ENCODE measurements at regions of chr9 and their contacts with region 1.

Region 1: GRCh38 chr9:113593682-113594281 is 130.3 kb downstream of the RGS3 start:
- DNase-seq: peak; percentile 94
- H3K4me3 ChIP-seq: peak overlapping the region; percentile 45 to 62
- H3K27ac ChIP-seq: peak overlapping the region; percentile 49 to 74
- H3K4me1 ChIP-seq: peaks cover 46% of the 10 kb centered on the region
- H3K27me3 ChIP-seq: no peaks in the 10 kb centered on the region
- CTCF ChIP-seq: no peak
- POLR2A ChIP-seq: peak; percentile 60

Region 2: DNA sequence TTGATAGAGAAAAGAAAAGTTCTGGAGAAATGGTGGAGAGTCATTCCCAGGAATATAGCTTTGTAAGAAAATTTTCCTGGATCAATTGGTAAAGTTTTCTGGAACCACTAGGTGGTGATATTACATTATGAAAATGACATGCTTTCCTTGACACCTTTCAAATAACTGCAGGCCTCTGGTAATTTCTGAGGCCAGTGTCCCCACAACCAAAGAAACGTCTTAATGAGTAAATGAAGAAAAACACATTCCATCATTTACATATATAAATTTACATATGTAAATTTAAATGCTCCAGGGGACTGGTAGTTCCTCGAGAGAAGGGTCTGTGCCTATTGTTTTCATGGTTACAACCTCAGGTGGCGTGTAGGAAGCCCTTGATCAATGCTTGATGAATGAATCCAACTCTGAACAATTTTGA is 147.4 kb before region 1 on chr9:
- intact Hi-C with region 1: loop called (anchors 5 kb)
- DNase-seq: peak; percentile 41
- H3K4me3 ChIP-seq: no peak overlapping the region
- H3K27ac ChIP-seq: no peak overlapping the region
- H3K4me1 ChIP-seq: peaks cover 3% of the 10 kb centered on the region
- H3K27me3 ChIP-seq: no peaks in the 10 kb centered on the region
- CTCF ChIP-seq: peak; percentile 51 to 69 (median 66)
- POLR2A ChIP-seq: no peak

Region 3: GRCh38 chr9:113463418-113464285 is 130.1 kb before region 1 on chr9 and contains the start of gene RGS3:
- intact Hi-C with region 1: no loop called
- DNase-seq: peak; percentile 60
- H3K4me3 ChIP-seq: peak within 1 kb of the TSS in 1 of 2 donors; percentile 6
- H3K27ac ChIP-seq: no peak within 1 kb of the TSS
- H3K4me1 ChIP-seq: no peaks in the 10 kb centered on the region
- H3K27me3 ChIP-seq: no peaks in the 10 kb centered on the region
- CTCF ChIP-seq: no peak
- POLR2A ChIP-seq: no peak
- total RNA-seq, gene RGS3: 119 to 125 TPM

Region 4: GRCh38 chr9:113657703-113658544 is 64.1 kb after region 1 on chr9:
- intact Hi-C with region 1: loop called (anchors 2 kb)
- DNase-seq: peak; percentile 90
- H3K4me3 ChIP-seq: no peak overlapping the region
- H3K27ac ChIP-seq: no peak overlapping the region
- H3K4me1 ChIP-seq: peaks cover 10% of the 10 kb centered on the region
- H3K27me3 ChIP-seq: no peaks in the 10 kb centered on the region
- CTCF ChIP-seq: peak; percentile 87 to 92 (median 90)
- POLR2A ChIP-seq: no peak

Measured in testis (tissue), 5 donors.